ENCODE measurements at regions of chr12 and their contacts with region 1.

Region 1: GRCh38 chr12:51911788-51912711 is 4.7 kb downstream of the ACVRL1 start:
- DNase-seq: no peak
- ATAC-seq: peak; percentile 31
- H3K4me3 Mint-ChIP-seq: no peak overlapping the region
- H3K27ac Mint-ChIP-seq: no peak overlapping the region
- H3K4me1 Mint-ChIP-seq: peaks cover 18% of the 10 kb centered on the region
- H3K27me3 Mint-ChIP-seq: peaks cover 35% of the 10 kb centered on the region
- CTCF ChIP-seq: no peak

Region 2: DNA sequence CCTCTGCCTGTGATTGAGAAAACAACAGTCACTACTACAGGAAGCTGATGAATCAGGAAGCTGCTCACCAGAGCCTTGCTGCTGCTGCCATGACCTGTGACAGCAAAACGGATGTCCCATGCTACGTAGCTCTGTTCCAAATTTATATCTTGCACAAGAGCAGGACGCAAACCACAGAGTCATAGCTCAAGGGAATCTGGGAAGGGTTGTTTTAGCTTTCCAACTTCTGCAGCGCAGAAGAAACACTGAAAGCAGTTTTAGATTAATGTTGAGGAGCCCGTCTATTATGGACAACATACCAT is 26.1 kb before region 1 on chr12:
- CTCF ChIA-PET with region 1: interaction called, 40 read pairs
- POLR2A ChIA-PET with region 1: no interaction called
- DNase-seq: no peak
- ATAC-seq: no peak
- H3K4me3 Mint-ChIP-seq: no peak overlapping the region
- H3K27ac Mint-ChIP-seq: no peak overlapping the region
- H3K4me1 Mint-ChIP-seq: peaks cover 25% of the 10 kb centered on the region
- H3K27me3 Mint-ChIP-seq: peaks cover 16% of the 10 kb centered on the region
- CTCF ChIP-seq: no peak

Region 3: GRCh38 chr12:51923501-51924271 is 11.6 kb after region 1 on chr12:
- CTCF ChIA-PET with region 1: interaction called, 143 read pairs
- POLR2A ChIA-PET with region 1: interaction called, 3 read pairs
- DNase-seq: peak; percentile 79
- ATAC-seq: peak; percentile 84
- H3K4me3 Mint-ChIP-seq: peak overlapping the region; percentile 52
- H3K27ac Mint-ChIP-seq: no peak overlapping the region
- H3K4me1 Mint-ChIP-seq: peaks cover 26% of the 10 kb centered on the region
- H3K27me3 Mint-ChIP-seq: peaks cover 22% of the 10 kb centered on the region
- CTCF ChIP-seq: peak; percentile 77

Region 4: DNA sequence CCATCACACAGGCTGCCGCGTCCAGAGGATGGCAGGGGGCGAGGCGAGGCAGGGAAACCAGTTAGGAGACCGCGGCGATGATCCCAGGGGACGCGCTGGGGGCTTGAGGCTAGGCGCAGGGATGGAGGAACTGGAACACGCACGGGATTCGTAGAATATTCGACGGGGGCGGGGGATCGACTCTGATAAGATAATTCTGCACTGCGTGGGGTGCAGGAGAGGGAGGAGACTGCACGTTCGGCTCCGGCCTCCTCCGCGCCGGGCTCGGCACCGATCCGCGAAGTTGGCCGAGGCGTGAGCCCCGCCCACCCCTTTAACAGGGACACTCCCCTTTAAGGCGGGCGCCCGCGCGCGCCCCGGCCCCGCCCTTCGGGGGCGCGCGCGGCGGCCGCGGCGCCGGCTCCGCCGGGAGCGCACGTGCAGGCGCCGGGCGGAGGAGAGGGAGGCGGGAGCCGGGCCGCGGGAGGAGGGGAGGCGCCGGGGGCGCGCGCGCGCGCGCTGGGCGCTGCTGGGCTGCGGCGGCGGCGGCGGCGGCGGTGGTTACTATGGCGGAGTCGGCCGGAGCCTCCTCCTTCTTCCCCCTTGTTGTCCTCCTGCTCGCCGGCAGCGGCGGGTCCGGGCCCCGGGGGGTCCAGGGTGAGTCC is 39.3 kb after region 1 on chr12 and contains the start of gene ACVR1B:
- CTCF ChIA-PET with region 1: interaction called, 11 read pairs
- POLR2A ChIA-PET with region 1: no interaction called
- DNase-seq: peak; percentile 87
- ATAC-seq: peak; percentile 92
- H3K4me3 Mint-ChIP-seq: peak within 1 kb of the TSS; percentile 80
- H3K27ac Mint-ChIP-seq: no peak within 1 kb of the TSS
- H3K4me1 Mint-ChIP-seq: peaks cover 23% of the 10 kb centered on the region
- H3K27me3 Mint-ChIP-seq: peaks cover 71% of the 10 kb centered on the region
- CTCF ChIP-seq: no peak
- total RNA-seq, gene ACVR1B: 20.9 to 24.1 TPM (median 22.3 TPM) in 3 replicates

Region 5: GRCh38 chr12:51994959-51995358 is 82.9 kb after region 1 on chr12:
- CTCF ChIA-PET with region 1: interaction called, 11 read pairs
- POLR2A ChIA-PET with region 1: no interaction called
- DNase-seq: no peak
- ATAC-seq: no peak
- H3K4me3 Mint-ChIP-seq: no peak overlapping the region
- H3K27ac Mint-ChIP-seq: no peak overlapping the region
- H3K4me1 Mint-ChIP-seq: peaks cover 3% of the 10 kb centered on the region
- H3K27me3 Mint-ChIP-seq: no peaks in the 10 kb centered on the region
- CTCF ChIP-seq: no peak

Measured in WTC11 (cell line).